Right ventricle myocardium superior (tissue), 1 donor: ENCODE measurements at regions of chr9 and their contacts with region 1.

Region 1: DNA sequence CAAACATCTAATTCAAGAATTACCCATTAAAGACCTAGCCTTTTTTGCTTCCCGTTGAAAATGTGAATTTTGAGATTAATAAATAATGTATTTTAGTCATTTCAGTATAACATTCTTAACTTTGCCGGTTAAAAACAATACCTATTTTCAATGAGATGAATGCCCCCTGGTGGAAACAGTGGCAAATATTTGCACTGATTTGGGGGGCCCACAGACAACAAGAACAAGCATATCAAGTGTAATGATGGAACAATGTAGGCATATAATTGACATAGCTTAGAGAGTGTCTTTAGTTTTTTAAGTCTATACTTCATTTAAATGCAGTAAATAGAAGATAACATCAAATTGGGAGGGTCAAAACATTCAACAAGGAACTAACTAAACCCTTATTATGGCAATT is 111.9 kb downstream of the NTRK2 start:
- DNase-seq: no peak
- ATAC-seq: no peak

Region 2: DNA sequence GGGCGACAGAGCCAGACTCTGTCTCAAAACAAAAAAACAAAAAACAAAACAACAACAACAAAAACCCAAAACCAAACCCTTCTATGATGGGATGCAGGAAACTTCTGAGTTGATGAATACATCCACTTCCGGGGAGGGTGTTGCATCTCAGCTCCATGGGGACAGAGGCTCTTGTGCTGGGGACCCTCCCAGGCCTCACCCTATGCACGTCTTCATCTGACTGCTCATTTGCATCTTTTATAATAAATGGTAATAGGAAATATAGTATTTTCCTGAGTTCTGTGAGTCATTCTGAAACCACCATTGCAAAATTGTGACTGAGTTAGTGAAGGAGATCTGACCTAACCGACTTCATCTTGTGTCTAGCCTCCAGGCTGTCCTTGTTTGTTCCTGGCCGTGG is 331.4 kb before region 1 on chr9:
- intact Hi-C with region 1: no loop called
- DNase-seq: no peak
- ATAC-seq: no peak

Region 3: DNA sequence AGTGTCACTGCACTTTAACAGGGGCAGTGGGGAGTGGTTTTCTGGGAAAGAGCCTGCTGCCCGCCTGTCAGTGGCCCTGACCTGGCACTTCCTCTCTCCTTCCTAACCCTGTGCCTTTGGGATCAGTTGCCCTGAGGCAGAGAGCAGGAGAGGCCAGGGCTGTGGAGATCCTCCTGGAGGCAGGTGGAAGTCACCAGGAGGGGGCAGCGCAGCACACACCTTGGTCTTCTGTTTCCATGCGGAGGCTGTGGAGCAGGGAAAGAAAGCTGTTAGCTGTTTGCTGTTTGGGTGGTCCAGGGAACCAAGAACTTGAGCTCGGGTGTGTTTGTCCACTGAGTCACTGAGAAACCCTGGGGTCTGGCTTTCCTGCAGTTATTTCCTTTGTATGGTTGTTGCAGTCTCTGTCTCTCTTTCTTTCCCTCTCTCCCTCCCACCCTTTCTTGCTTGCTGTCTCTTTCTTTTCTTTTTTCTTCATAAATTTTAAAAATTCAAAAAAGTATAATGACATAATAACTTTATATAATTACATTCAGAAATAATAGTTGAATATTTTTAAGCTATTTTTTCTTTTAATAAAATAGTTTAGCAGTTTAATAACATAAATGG is 83.8 kb before region 1 on chr9:
- intact Hi-C with region 1: loop called (anchors 5 kb)
- DNase-seq: peak; percentile 80
- ATAC-seq: peak; percentile 95

Region 4: GRCh38 chr9:84845956-84846900 is 64.8 kb after region 1 on chr9:
- intact Hi-C with region 1: loop called (anchors 10 kb)
- DNase-seq: no peak
- ATAC-seq: no peak

Region 5: GRCh38 chr9:84953797-84954705 is 172.6 kb after region 1 on chr9:
- intact Hi-C with region 1: loop called (anchors 10 kb)
- DNase-seq: peak; percentile 86
- ATAC-seq: peak; percentile 97